Activated T-helper 1 cell treated with anti-CD3 and anti-CD28 coated beads, Interleukin-12 subunit alpha, Interleukin-12 subunit beta, Interleukin-2, Interleukin-4 antibody, amounts not matched to agents 30 ng/mL and 10 ng/mL and 1 ng/mL, durations not matched to agents 14 hours and 24 hours and 36 hours (primary cell): ENCODE measurements at regions of chr14 and their contacts with region 1.

Region 1: GRCh38 chr14:100375963-100376735 is 53.0 kb downstream of the SLC25A47 start:
- DNase-seq: peak; percentile 94
- H3K4me3 Mint-ChIP-seq: peak within 1 kb of the TSS; percentile 97
- H3K27ac Mint-ChIP-seq: peak within 1 kb of the TSS; percentile 96
- H3K4me1 Mint-ChIP-seq: peaks cover 53% of the 10 kb centered on the region
- H3K27me3 Mint-ChIP-seq: peaks cover 2% of the 10 kb centered on the region

Region 2: GRCh38 chr14:99683619-99684355 is 692.4 kb before region 1 on chr14 and contains the start of gene CYP46A1:
- intact Hi-C with region 1: loop called (anchors 10 kb)
- DNase-seq: peak; percentile 99
- H3K4me3 Mint-ChIP-seq: peak within 1 kb of the TSS; percentile 87
- H3K27ac Mint-ChIP-seq: peak within 1 kb of the TSS; percentile 87
- H3K4me1 Mint-ChIP-seq: peaks cover 5% of the 10 kb centered on the region
- H3K27me3 Mint-ChIP-seq: peaks cover 31% of the 10 kb centered on the region
- total RNA-seq, gene CYP46A1: 0.27 TPM in 1 of 2 replicates, not detected in the other

Region 3: DNA sequence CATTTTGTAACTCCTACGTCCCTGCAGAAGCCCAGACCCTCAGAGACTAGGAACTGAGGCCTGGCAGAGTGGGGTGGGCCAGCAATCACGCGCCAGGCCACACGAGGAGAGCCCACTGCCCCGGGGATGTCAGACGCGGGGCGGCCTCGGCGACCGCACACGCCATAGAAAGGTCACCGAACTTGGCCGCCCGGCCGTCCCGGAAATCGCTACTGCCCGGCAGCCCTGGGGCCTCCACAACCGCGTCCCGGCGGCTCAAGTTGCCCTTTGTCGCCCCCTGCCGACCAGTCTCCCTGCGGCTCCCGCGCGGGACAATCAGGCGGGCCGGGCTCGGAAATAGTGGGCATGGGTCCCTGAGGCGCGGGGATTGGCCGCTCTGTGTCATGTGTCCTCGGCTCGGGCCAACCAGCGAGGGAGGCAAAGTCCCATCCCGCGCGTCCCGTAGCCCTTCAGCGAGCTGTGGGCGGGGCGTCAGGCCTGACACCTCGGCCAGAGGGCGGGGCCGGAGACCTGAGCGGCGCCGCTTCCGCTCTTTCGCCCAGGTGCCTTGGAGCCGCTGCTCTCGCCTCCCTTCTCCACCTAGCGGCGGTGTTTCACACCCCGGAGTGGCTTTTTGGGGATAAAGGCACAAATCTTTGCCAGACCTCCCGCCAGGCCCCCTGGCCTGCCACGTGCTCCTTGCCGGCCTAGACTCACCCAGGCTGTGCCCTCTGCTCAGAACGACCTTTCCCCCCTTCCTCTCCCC is 183.3 kb before region 1 on chr14:
- intact Hi-C with region 1: loop called (anchors 1 kb)
- DNase-seq: peak; percentile 100
- H3K4me3 Mint-ChIP-seq: peak overlapping the region; percentile 60
- H3K27ac Mint-ChIP-seq: peak overlapping the region; percentile 67
- H3K4me1 Mint-ChIP-seq: peaks cover 6% of the 10 kb centered on the region
- H3K27me3 Mint-ChIP-seq: no peaks in the 10 kb centered on the region

Region 4: GRCh38 chr14:100239840-100240724 is 136.1 kb before region 1 on chr14:
- intact Hi-C with region 1: loop called (anchors 1 kb)
- DNase-seq: peak; percentile 83
- H3K4me3 Mint-ChIP-seq: peak overlapping the region; percentile 92
- H3K27ac Mint-ChIP-seq: peak overlapping the region; percentile 90
- H3K4me1 Mint-ChIP-seq: peaks cover 54% of the 10 kb centered on the region
- H3K27me3 Mint-ChIP-seq: no peaks in the 10 kb centered on the region

Region 5: DNA sequence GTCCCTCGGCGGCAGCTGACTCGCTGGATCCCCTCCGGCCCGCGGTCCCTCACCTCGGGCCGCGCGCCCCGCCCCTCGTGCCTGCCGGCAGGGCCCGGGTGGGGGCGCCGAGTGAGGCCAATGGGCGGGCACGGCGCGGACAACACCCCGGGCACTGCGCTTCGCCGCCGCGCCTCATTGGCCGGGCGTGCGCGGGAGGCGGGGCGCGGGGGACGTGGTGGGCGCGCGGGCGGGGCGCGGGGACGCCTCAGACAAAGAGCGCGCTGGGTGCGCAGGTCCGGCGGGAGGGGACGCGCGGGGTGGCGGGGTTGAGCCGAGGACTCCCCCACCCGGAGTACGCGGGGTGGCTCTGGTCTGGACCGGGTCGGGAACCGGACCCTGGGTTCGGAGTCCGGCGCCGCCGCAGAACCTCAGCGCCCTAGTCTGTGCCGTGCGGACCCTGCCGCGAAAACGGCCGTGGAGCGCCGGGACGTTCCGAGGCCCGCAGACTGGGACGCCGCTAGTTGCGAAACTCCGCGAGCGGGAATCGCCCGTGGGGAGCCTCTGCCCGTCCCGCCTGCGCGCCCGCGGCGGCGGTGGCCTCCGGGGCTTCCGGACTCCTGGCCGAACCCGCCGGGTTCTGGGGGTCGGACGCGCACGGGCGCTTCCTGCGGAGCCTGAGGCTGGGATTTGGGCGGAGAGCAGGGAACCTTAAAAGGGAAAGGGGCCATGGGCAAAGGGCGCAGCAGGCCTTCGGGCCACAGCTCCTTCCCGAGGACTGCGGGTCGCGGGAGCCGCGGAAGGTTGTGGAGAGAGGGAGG is 69.5 kb before region 1 on chr14 and contains the start of gene SLC25A29:
- intact Hi-C with region 1: loop called (anchors 1 kb)
- DNase-seq: peak; percentile 68
- H3K4me3 Mint-ChIP-seq: peak within 1 kb of the TSS; percentile 81
- H3K27ac Mint-ChIP-seq: no peak within 1 kb of the TSS
- H3K4me1 Mint-ChIP-seq: peaks cover 22% of the 10 kb centered on the region
- H3K27me3 Mint-ChIP-seq: peaks cover 23% of the 10 kb centered on the region
- total RNA-seq, gene SLC25A29: 15.9 and 19.1 TPM in 2 replicates

Region 6: DNA sequence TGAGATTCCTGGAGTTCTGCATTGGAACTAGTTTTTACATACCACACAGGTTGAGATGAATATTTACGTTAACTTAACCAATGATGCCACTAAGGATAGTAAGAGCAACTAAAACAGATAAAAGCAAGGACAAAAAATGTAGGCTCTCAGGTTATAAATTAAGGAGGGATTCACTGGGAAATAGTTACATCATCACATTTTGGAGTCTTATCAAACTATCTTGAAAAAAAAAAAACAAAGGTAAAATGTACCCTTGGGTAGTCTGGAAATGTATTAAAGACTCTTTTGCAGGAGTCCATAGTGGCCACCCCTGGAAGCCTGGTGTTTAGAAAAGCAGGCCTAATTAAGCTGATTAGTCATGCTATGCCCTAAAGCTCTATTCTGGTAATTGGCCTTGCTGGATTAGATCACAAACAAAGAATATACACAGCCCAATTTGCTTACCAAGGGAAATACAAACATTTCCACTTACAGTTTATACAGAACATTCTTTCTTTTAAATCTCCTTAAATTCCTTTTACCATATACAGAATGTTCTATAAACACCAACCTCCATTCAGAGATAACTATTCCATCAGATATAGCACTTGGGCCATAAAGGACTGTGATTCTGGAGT is 13.7 kb before region 1 on chr14:
- intact Hi-C with region 1: loop called (anchors 2 kb)
- DNase-seq: no peak
- H3K4me3 Mint-ChIP-seq: no peak overlapping the region
- H3K27ac Mint-ChIP-seq: no peak overlapping the region
- H3K4me1 Mint-ChIP-seq: peaks cover 60% of the 10 kb centered on the region
- H3K27me3 Mint-ChIP-seq: no peaks in the 10 kb centered on the region

Region 7: DNA sequence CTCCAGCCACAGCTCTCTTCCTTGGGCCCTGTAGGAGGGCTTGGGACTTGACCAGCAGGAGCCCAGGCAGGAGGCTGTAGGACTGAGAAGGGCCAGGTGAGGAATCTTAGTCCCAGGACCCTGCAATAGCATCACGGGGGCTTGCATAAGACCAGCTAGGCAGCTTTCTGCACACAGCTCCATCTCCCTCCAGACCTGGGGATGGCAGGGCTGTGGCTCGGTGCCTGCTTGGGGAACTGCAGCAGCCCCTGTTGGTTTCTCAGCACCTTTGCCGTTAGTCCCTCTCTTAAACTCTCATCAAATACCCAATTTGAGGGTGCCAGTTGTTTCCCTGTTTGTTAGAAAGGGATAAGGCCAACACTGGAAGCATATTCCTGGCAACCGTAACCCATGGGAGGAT is 1199.4 kb after region 1 on chr14:
- intact Hi-C with region 1: no loop called
- DNase-seq: no peak
- H3K4me3 Mint-ChIP-seq: no peak overlapping the region
- H3K27ac Mint-ChIP-seq: no peak overlapping the region
- H3K4me1 Mint-ChIP-seq: no peaks in the 10 kb centered on the region
- H3K27me3 Mint-ChIP-seq: peaks cover 3% of the 10 kb centered on the region